Activated T-helper 1 cell treated with anti-CD3 and anti-CD28 coated beads, Interleukin-12 subunit alpha, Interleukin-12 subunit beta, Interleukin-2, Interleukin-4 antibody, amounts not matched to agents 30 ng/mL and 10 ng/mL and 1 ng/mL, durations not matched to agents 14 hours and 24 hours and 36 hours (primary cell): ENCODE measurements at regions of chr9 and their contacts with region 1.

Region 1: DNA sequence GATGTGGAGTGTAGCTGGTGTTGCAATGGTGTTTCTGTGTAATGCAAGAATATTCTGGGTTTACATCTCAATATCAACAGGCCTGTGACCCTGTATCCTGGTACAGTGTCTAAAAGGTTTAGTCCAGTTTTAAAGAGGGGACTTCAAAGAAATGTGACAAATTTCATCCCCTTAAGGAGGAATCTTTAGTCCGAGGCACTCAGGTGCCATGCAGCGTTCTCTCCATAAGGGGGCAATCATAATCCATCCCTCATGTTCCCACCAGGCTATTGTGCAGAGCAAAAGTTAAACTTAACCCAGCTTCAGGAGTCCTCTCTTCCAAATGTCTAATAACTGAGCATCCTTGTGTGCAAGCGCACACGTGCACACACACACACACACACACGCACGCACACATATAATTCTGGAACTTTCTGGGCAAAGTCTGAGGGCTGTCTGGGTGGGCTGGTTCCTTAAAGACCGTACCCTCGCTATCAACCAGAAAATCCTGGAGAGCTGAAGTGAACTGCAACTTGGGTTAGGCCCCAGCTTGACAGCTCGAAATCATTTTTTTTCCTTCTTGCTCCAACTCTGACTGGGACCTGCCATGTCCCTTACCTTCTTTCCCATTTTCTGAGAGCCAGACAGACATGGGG is 46.0 kb downstream of the CRB2 start:
- DNase-seq: no peak
- H3K4me3 Mint-ChIP-seq: no peak overlapping the region
- H3K27ac Mint-ChIP-seq: no peak overlapping the region
- H3K4me1 Mint-ChIP-seq: no peaks in the 10 kb centered on the region
- H3K27me3 Mint-ChIP-seq: no peaks in the 10 kb centered on the region

Region 2: DNA sequence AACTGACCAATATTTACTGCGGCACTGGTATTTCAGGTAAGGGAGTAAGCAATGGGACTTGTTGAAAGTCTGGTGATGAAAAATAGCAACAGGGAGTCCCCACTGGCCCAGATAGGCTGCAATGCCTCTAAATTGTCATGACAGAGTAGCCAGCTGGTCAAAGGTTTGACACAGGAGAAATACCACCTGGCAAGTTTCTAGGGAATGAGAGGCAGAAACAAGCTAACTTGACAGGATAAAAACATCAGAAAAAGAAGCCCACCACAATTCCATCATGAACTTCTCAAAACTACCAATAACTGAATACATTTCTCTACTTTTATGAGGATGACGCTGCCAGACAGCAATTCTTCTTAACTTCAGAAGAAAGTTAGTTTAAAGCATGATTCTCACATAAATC is 233.4 kb before region 1 on chr9:
- intact Hi-C with region 1: no loop called
- DNase-seq: no peak
- H3K4me3 Mint-ChIP-seq: no peak overlapping the region
- H3K27ac Mint-ChIP-seq: no peak overlapping the region
- H3K4me1 Mint-ChIP-seq: no peaks in the 10 kb centered on the region
- H3K27me3 Mint-ChIP-seq: no peaks in the 10 kb centered on the region

Region 3: GRCh38 chr9:124040935-124041816 is 639.2 kb after region 1 on chr9:
- intact Hi-C with region 1: loop called (anchors 10 kb)
- DNase-seq: peak; percentile 20
- H3K4me3 Mint-ChIP-seq: no peak overlapping the region
- H3K27ac Mint-ChIP-seq: no peak overlapping the region
- H3K4me1 Mint-ChIP-seq: peaks cover 6% of the 10 kb centered on the region
- H3K27me3 Mint-ChIP-seq: peaks cover 38% of the 10 kb centered on the region